Adrenal gland (tissue), 19 donors: ENCODE measurements at regions of chr2 and their contacts with region 1.

Region 1: DNA sequence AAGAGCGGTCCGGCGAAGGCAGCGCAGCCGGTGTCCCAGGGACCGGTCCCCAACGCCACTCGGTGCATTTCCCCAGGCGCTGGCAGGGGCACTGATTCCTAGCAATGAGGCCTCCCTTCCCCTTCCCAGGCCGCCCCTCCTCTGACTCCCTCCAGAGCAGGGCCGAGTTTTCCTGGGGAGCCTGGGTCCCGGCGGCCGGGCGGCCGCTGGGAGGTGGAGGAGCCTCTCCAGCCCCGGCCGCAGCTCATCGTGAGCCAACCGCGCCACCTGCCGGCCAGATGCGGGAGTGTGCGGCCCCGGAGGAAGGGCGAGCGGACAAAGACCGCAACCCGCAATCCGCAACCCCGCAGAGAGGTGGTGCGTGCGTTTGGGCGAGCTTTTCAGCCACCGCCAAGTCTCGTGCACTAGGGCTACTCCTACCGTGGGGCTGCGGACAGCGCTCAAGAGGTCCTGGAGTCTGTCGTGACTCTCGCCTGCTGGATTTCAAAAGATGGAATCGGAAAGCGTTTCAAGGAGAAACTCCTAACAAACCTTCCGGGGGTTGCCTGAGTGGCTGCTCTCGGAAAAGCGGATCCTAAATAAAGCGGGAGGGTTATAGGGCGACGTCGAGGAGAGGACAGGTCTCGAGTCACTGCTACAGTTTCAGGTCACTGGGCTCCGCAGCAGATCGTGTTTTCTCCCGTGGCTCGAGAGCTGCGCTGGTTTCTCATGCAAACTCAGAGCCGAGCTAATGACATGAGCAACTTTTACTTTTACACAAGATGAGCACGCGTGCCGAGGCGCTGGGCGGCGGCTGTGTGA is 1.5 kb upstream of the EPHA4 start:
- DNase-seq: peak; percentile 76 to 89 (median 86)
- H3K4me3 ChIP-seq: peak overlapping the region; percentile 7 to 83 (median 35)
- H3K27ac ChIP-seq: peak overlapping the region in 3 of 5 donors; percentile 64 to 88 (median 71)
- H3K4me1 ChIP-seq: peaks cover 9 to 17% of the 10 kb centered on the region in 2 donors
- H3K27me3 ChIP-seq: peaks cover 29% of the 10 kb centered on the region
- CTCF ChIP-seq: peak; percentile 89 to 99 (median 98)
- POLR2A ChIP-seq: peak in 1 of 2 donors; percentile 40

Region 2: GRCh38 chr2:219736209-219736608 is 1837.4 kb before region 1 on chr2:
- intact Hi-C with region 1: loop called in 1 of 2 experiments (anchors 5 kb)
- DNase-seq: peak in 3 of 7 donors; percentile 19 to 37 (median 26)
- H3K4me3 ChIP-seq: no peak overlapping the region
- H3K27ac ChIP-seq: no peak overlapping the region
- H3K4me1 ChIP-seq: no peaks in the 10 kb centered on the region
- H3K27me3 ChIP-seq: no peaks in the 10 kb centered on the region
- CTCF ChIP-seq: peak; percentile 15 to 63 (median 57)
- POLR2A ChIP-seq: no peak

Region 3: GRCh38 chr2:220687231-220687843 is 886.3 kb before region 1 on chr2:
- intact Hi-C with region 1: loop called (anchors 2 to 5 kb)
- DNase-seq: peak; percentile 71 to 88 (median 81)
- H3K4me3 ChIP-seq: no peak overlapping the region
- H3K27ac ChIP-seq: no peak overlapping the region
- H3K4me1 ChIP-seq: no peaks in the 10 kb centered on the region
- H3K27me3 ChIP-seq: peaks cover 8% of the 10 kb centered on the region
- CTCF ChIP-seq: peak; percentile 72 to 91 (median 86)
- POLR2A ChIP-seq: no peak

Region 4: GRCh38 chr2:221318376-221319130 is 255.1 kb before region 1 on chr2:
- intact Hi-C with region 1: no loop called
- DNase-seq: no peak
- H3K4me3 ChIP-seq: no peak overlapping the region
- H3K27ac ChIP-seq: no peak overlapping the region
- H3K4me1 ChIP-seq: no peaks in the 10 kb centered on the region
- H3K27me3 ChIP-seq: no peaks in the 10 kb centered on the region
- CTCF ChIP-seq: no peak
- POLR2A ChIP-seq: no peak

Region 5: DNA sequence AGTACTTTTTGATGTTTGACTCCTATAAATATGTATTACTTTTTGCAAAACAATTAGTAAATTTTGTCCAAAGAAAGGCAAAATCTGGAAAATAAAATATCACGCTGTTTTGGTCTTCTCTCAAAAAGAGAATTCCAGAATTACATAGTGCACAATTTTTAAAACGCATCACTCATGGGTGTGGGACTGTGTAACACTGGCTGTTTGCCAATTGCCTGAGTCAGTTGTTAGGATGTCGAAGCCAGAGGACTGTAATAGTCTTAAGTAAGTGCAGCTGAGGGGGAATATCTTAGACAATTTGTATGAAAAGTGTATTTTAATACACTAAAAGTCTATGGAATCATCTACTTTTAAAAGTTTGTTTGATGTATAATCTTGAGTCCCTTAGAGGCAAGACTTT is 22.6 kb after region 1 on chr2:
- intact Hi-C with region 1: no loop called
- DNase-seq: no peak
- H3K4me3 ChIP-seq: no peak overlapping the region
- H3K27ac ChIP-seq: no peak overlapping the region
- H3K4me1 ChIP-seq: no peaks in the 10 kb centered on the region
- H3K27me3 ChIP-seq: no peaks in the 10 kb centered on the region
- CTCF ChIP-seq: no peak
- POLR2A ChIP-seq: no peak